Common myeloid progenitor, CD34-positive (primary cell): ENCODE measurements at regions of chr2 and their contacts with region 1.

Region 1: GRCh38 chr2:88596141-88596830 is 31.0 kb downstream of the EIF2AK3 start:
- DNase-seq: no peak
- H3K4me3 ChIP-seq: no peak overlapping the region
- H3K27ac ChIP-seq: no peak overlapping the region
- H3K4me1 ChIP-seq: peaks cover 0 to 7% (median 2%) of the 10 kb centered on the region in 4 experiments
- H3K27me3 ChIP-seq: no peaks in the 10 kb centered on the region

Region 2: DNA sequence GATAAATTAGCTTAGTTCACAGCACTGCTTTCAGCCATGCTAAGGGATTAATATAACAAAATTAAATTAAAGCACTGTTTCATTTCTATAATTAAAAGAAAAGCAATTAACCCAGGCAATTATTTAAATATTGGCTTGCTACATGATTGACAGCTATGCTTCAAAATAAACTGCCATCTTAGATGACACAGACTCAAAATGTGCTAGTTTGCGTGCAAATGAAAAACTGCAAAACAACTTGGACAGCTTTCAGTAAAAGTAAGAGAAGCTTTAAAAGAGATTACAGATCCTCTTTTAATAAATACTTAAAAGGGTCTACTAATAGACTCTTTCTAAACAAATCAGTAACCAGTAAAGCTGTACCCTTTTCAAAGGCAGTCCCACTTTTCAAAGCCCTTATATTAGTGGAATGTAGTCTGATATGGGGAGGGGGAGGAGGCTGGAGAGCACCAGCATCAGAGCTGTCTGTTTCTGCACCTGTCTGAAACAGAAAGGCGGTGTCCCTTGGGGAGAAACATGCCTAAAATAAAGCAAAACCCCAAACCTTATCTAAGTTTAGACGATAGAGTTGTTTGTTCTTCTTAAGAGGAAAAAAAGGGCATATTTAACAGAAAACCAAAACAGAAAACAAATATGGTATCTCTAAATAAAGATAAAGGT is 10.2 kb after region 1 on chr2:
- CTCF ChIA-PET with region 1: interaction called, 18 read pairs
- POLR2A ChIA-PET with region 1: no interaction called
- DNase-seq: no peak
- H3K4me3 ChIP-seq: no peak overlapping the region
- H3K27ac ChIP-seq: no peak overlapping the region
- H3K4me1 ChIP-seq: peaks cover 0 to under 1% (median 0%) of the 10 kb centered on the region in 4 experiments
- H3K27me3 ChIP-seq: no peaks in the 10 kb centered on the region